Activated CD4-positive, alpha-beta T cell treated with anti-CD3 and anti-CD28 coated beads for 36 hours (primary cell): ENCODE measurements at regions of chr7 and their contacts with region 1.

Region 1: GRCh38 chr7:94877731-94878670 is 29.4 kb upstream of the PPP1R9A start:
- DNase-seq: no peak
- ATAC-seq: no peak
- H3K4me3 Mint-ChIP-seq: no peak overlapping the region
- H3K27ac Mint-ChIP-seq: no peak overlapping the region
- H3K4me1 Mint-ChIP-seq: no peaks in the 10 kb centered on the region
- H3K27me3 Mint-ChIP-seq: no peaks in the 10 kb centered on the region

Region 2: GRCh38 chr7:94395141-94396036 is 482.6 kb before region 1 on chr7:
- CTCF ChIA-PET with region 1: no interaction called
- POLR2A ChIA-PET with region 1: no interaction called
- intact Hi-C with region 1: no loop called
- DNase-seq: peak; percentile 41
- ATAC-seq: peak; percentile 80
- H3K4me3 Mint-ChIP-seq: no peak overlapping the region
- H3K27ac Mint-ChIP-seq: no peak overlapping the region
- H3K4me1 Mint-ChIP-seq: peaks cover 8% of the 10 kb centered on the region
- H3K27me3 Mint-ChIP-seq: peaks cover 23% of the 10 kb centered on the region

Region 3: DNA sequence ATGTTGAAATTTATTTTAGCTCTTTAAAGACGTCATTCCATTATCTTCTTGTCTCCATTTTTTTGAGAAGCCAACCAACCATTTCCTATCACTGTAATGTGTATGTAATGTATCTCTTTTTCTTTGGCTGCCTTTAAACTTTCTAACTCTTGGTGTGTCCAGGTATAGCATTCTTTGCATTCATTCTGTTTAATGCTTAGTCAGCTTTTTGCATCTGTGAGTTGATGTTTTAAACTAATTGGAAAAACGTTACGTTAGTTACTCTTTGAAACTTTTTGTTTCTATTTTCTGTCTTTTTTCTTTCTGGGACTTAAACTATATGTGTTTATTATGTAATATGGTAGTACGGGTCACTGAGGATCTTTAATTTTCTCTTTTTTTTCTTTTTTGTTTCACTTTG is 48.0 kb before region 1 on chr7:
- CTCF ChIA-PET with region 1: no interaction called
- POLR2A ChIA-PET with region 1: no interaction called
- intact Hi-C with region 1: loop called in 1 of 2 experiments (anchors 5 kb)
- DNase-seq: no peak
- ATAC-seq: no peak
- H3K4me3 Mint-ChIP-seq: no peak overlapping the region
- H3K27ac Mint-ChIP-seq: no peak overlapping the region
- H3K4me1 Mint-ChIP-seq: no peaks in the 10 kb centered on the region
- H3K27me3 Mint-ChIP-seq: no peaks in the 10 kb centered on the region

Region 4: GRCh38 chr7:94907026-94907810 is 29.2 kb after region 1 on chr7 and contains the start of gene PPP1R9A:
- CTCF ChIA-PET with region 1: no interaction called
- POLR2A ChIA-PET with region 1: no interaction called
- intact Hi-C with region 1: no loop called
- DNase-seq: no peak
- ATAC-seq: no peak
- H3K4me3 Mint-ChIP-seq: no peak within 1 kb of the TSS
- H3K27ac Mint-ChIP-seq: no peak within 1 kb of the TSS
- H3K4me1 Mint-ChIP-seq: peaks cover 2% of the 10 kb centered on the region
- H3K27me3 Mint-ChIP-seq: peaks cover 42% of the 10 kb centered on the region
- total RNA-seq, gene PPP1R9A: not detected